ENCODE measurements at regions of chr16 and their contacts with region 1.

Region 1: DNA sequence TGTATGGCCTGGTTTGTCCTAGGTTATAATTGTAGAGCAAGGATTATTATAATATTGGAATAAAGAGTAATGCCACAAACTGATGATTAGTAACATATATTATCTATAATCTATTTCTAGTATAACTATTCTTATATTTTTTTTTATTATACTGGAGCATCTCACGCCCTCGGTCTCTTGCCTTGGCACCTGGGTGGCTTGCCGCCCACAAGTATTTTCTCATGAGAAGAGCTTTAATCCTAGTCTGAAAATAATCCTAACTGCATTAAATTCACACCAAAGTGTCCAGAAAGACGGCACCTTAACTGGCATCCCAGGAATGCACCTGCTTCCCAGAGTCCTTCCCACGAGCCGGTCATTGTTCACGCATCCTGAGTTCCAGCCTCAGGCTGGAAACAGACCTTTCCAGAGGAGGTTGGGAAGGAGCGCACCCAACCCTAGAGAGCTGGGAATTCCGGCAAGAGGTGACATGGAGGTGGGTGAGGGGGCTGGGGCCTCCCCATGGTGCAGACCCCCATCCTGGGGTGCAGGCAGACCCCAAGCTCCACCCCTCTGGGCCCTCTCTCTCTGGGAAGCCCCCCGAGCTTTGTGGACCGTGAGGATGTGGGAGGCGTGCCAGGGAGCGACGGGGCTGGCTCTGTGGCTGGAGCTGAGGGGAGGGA is 15.9 kb downstream of the CHMP1A start:
- DNase-seq: peak in 4 of 5 donors; percentile 52 to 71 (median 66)
- H3K4me3 ChIP-seq: no peak overlapping the region
- H3K27ac ChIP-seq: no peak overlapping the region
- H3K4me1 ChIP-seq: peaks cover 0 to 4% (median 0%) of the 10 kb centered on the region in 3 donors
- H3K27me3 ChIP-seq: no peaks in the 10 kb centered on the region
- CTCF ChIP-seq: no peak

Region 2: DNA sequence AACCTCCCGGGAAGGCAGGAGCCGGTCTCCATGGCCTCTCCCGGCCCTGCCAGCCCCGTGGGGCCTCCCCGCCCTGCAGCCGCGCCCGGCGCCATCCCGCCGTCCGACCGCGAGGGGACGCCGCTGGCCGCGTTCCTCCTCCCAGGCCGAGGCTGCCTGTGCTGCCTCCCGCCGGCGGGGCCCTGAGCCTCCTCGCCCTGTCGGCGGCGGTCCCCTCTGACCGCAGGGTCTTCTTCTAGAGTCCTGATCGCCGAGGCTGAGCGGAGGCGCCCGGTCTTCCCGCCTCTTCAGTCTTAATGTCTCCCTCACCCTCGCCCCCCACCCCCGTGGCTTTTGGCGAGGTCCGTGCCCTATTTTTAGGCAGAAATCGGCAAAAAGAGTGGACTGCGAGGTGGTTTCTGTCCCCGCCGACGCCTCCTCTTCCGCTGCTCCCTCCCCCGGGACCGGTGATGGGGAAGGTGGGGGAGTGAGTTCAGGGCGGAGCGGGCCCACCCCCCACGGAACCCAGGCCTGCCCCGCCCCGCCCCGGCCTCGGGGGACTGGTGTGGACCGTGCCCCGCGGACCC is 66.8 kb before region 1 on chr16:
- intact Hi-C with region 1: loop called (anchors 10 kb)
- DNase-seq: peak; percentile 67 to 83 (median 81)
- H3K4me3 ChIP-seq: no peak overlapping the region
- H3K27ac ChIP-seq: no peak overlapping the region
- H3K4me1 ChIP-seq: peaks cover 0 to 10% (median 8%) of the 10 kb centered on the region in 3 donors
- H3K27me3 ChIP-seq: no peaks in the 10 kb centered on the region
- CTCF ChIP-seq: peak; percentile 76

Measured in kidney (tissue), 22 donors.